Transverse colon (tissue), 4 donors: ENCODE measurements at regions of chr11 and their contacts with region 1.

Region 1: DNA sequence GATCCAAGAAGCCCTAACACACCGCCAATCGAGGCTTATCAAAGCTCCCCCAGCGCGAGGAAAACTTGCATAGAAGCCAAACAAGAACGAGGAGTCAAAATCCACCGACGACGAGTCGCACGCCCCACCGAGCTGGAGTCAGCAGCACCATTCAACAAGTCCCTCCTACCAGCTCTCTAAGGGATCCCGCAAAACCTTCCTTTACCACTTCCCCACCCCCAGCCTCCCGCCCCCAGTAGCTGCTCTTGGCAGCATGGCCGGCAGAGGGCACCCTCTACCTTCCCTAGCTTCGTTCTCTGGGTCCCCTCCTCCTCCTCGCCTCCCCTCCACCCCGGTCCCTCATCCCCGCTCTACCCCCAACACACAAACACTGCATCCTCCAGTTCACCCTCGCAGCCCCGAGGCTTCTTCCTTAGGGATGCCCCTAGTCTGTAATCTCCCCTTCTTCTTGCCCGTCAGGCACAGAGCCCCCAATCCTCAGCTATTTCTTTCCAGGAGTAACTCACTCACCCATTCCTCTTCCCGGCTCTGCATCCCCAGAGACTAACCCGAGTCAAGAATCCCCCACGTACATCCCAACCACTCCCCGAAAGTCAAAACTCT is 1.3 kb downstream of the BDNF start:
- DNase-seq: peak; percentile 66
- H3K4me3 ChIP-seq: peak overlapping the region in 3 of 4 donors; percentile 39 to 64 (median 47)
- H3K27ac ChIP-seq: no peak overlapping the region
- H3K4me1 ChIP-seq: peaks cover 12 to 30% (median 27%) of the 10 kb centered on the region in 4 donors
- H3K27me3 ChIP-seq: peaks cover 90% of the 10 kb centered on the region
- CTCF ChIP-seq: peak; percentile 44 to 87 (median 72)
- EP300 ChIP-seq: no peak
- POLR2A ChIP-seq: no peak

Region 2: DNA sequence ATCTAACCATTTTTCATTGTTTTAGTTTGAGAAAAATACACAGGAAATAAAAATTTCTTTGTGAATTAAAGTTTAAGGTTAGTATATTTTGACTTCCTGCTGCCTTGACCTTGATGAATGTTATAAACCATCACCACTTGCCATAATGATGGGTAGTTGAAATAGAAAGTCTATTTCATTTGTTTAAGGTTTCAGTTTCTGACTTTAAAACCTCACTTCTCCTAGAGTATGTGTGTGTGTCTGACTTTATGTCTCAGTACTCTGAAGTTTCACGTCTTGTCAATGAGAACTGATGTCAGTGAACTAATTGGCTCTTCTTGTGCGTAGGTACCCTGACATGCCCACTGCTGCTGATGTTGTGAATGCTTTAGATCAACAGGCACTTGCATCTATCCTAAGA is 597.5 kb after region 1 on chr11:
- in situ Hi-C with region 1: loop called in 1 of 4 experiments (anchors 25 kb)
- intact Hi-C with region 1: no loop called
- DNase-seq: no peak
- H3K4me3 ChIP-seq: no peak overlapping the region
- H3K27ac ChIP-seq: no peak overlapping the region
- H3K4me1 ChIP-seq: no peaks in the 10 kb centered on the region
- H3K27me3 ChIP-seq: no peaks in the 10 kb centered on the region
- CTCF ChIP-seq: no peak
- EP300 ChIP-seq: no peak
- POLR2A ChIP-seq: no peak

Region 3: DNA sequence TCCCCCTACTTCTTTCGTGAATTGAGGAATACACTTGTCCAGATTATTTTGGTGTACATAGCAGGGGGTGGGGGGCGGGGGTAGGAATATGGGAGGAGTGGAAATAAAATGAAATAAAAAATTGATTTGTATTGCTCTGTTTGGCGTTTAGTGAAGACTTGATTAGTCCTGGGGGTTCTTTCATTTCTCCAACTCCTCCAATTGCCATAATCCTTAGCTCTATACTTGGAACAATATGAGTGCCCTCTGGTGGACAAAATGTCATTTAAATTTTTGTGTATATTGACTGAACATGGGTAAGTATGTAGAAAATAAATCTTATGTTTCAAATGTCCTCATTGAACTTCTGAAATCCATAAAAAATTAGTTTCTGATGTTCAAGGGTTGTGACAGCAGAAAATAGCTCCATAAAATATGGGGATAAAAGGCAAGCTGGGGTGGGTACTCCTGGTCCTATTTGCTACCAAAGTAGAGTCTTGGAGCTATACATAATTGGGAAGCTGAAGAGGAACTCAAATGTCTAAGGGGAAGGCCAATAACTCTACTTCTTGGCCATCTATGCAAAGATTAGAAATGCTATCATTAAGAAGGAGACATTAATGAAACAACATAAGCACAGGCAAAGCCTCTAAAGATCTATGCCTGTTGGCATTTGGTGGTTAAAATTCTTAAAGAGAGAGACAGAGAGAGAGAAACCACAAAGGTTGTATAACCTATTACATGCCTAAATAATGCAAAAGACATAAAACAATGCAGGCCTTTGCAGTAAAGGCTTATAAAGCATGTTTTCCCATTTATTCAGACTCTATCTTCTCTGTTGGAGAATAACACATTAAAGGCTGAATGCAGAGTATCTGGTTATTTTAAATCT is 830.8 kb after region 1 on chr11:
- in situ Hi-C with region 1: loop called in 3 of 4 experiments (anchors 25 kb)
- intact Hi-C with region 1: no loop called
- DNase-seq: no peak
- H3K4me3 ChIP-seq: no peak overlapping the region
- H3K27ac ChIP-seq: no peak overlapping the region
- H3K4me1 ChIP-seq: no peaks in the 10 kb centered on the region
- H3K27me3 ChIP-seq: no peaks in the 10 kb centered on the region
- CTCF ChIP-seq: peak; percentile 20 to 44 (median 39)
- EP300 ChIP-seq: no peak
- POLR2A ChIP-seq: no peak

Region 4: GRCh38 chr11:29159552-29160465 is 1460.8 kb after region 1 on chr11:
- in situ Hi-C with region 1: loop called in 1 of 4 experiments (anchors 25 kb)
- intact Hi-C with region 1: no loop called
- DNase-seq: peak; percentile 31
- H3K4me3 ChIP-seq: no peak overlapping the region
- H3K27ac ChIP-seq: no peak overlapping the region
- H3K4me1 ChIP-seq: no peaks in the 10 kb centered on the region
- H3K27me3 ChIP-seq: no peaks in the 10 kb centered on the region
- CTCF ChIP-seq: peak; percentile 61 to 65 (median 63)
- EP300 ChIP-seq: no peak
- POLR2A ChIP-seq: no peak

Region 5: DNA sequence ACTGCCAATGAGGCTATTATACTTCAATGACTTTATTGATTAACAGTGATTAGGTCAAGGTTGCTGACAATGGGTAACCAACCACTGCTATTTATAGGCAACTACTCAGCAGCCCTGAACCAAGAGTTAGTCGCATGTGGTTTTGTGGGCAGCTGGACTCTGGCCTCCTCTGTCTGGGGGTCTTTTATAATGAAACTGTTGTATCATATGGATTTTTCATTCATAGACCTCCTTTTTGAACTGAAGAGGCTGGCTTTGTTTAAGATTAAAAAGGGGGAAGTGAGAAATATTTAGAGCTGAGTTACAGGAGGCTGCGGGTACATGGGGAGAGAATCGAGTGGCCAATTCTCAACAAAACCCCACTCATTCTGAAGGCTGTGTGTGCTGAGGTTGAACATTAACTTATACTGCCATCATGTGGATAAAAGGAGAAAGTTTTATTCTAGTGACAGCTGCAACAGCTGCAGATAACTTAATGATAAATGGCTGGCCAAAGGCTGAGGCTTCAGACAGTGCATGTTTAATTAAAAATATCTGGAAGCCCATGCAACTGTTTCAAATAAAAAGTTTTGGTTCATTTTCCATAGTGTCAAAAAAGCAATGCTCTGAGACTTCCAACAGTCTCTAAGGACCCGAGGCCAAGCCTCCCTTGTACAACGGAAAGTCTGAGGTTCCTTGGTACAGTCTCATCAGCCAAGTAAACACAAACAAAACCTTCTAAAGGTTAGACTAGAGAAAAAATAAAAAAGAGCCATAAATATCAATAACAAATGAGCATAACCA is 1635.2 kb after region 1 on chr11:
- in situ Hi-C with region 1: loop called (anchors 10 to 25 kb)
- intact Hi-C with region 1: no loop called
- DNase-seq: no peak
- H3K4me3 ChIP-seq: no peak overlapping the region
- H3K27ac ChIP-seq: no peak overlapping the region
- H3K4me1 ChIP-seq: no peaks in the 10 kb centered on the region
- H3K27me3 ChIP-seq: no peaks in the 10 kb centered on the region
- CTCF ChIP-seq: peak in 4 of 5 experiments; percentile 19 to 38 (median 30)
- EP300 ChIP-seq: no peak
- POLR2A ChIP-seq: no peak

Region 6: GRCh38 chr11:29343465-29344333 is 1644.7 kb after region 1 on chr11:
- in situ Hi-C with region 1: loop called (anchors 10 to 25 kb)
- intact Hi-C with region 1: no loop called
- DNase-seq: peak; percentile 44
- H3K4me3 ChIP-seq: no peak overlapping the region
- H3K27ac ChIP-seq: no peak overlapping the region
- H3K4me1 ChIP-seq: no peaks in the 10 kb centered on the region
- H3K27me3 ChIP-seq: no peaks in the 10 kb centered on the region
- CTCF ChIP-seq: peak; percentile 44 to 80 (median 66)
- EP300 ChIP-seq: no peak
- POLR2A ChIP-seq: no peak